Calu3 (cell line): ENCODE measurements at regions of chr4 and their contacts with region 1.

Region 1: DNA sequence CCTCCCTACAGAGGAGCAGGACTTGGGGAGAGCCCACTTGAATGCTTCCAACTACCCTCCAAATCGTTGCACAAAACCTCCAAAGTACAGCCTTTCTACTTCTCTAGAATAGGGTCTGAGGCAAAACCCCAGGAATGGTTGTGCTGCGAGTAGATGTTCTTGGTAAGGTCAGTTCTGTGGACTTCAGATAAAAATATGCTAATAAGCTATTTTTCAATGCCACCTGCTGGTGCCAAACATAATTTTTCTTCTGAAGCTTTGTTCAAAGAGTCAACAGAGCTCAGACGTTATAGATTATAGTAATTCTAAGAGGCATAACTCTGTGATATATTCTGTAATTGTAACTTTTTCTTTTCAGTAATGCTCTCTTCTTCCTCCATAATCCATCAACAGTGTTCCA is 425.7 kb downstream of the GPAT3 start:
- DNase-seq: peak; percentile 2
- H3K4me3 Mint-ChIP-seq: no peak overlapping the region
- H3K27ac Mint-ChIP-seq: no peak overlapping the region
- H3K4me1 Mint-ChIP-seq: no peaks in the 10 kb centered on the region
- H3K27me3 Mint-ChIP-seq: peaks cover 8% of the 10 kb centered on the region
- CTCF ChIP-seq: no peak

Region 2: GRCh38 chr4:83503974-83504373 is 457.6 kb before region 1 on chr4:
- CTCF ChIA-PET with region 1: no interaction called
- intact Hi-C with region 1: loop called (anchors 10 kb)
- DNase-seq: no peak
- H3K4me3 Mint-ChIP-seq: no peak overlapping the region
- H3K27ac Mint-ChIP-seq: no peak overlapping the region
- H3K4me1 Mint-ChIP-seq: no peaks in the 10 kb centered on the region
- H3K27me3 Mint-ChIP-seq: no peaks in the 10 kb centered on the region
- CTCF ChIP-seq: no peak

Region 3: DNA sequence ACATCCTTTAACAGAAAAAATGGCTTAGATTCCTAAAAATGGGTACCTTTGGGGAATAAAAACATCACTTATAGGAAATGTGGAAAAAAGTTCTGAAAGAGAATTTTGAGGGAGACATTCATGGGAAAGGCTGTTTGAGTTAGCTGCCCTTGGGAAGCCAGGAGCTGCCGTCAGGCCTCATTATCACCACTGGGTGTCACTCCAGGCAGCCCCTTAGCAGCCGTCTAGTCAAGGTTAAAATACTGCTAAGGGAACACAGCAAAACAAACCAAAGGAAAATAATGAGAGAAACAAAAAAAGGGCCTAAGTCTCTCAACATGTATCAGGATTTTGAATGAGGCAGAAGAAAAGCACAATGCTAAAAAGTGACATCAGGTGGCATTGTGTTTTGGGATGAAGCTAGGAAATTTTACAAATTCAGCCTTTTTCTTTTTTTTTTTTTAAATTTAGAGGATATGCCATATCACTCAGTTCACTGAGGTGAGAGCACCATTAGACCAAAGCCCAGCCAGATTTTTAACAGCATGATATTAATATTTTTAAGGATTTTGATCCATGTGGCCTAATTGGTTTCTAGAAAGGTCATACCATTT is 190.4 kb before region 1 on chr4:
- CTCF ChIA-PET with region 1: interaction called, 11 read pairs
- intact Hi-C with region 1: loop called (anchors 1 kb)
- DNase-seq: peak; percentile 38
- H3K4me3 Mint-ChIP-seq: no peak overlapping the region
- H3K27ac Mint-ChIP-seq: no peak overlapping the region
- H3K4me1 Mint-ChIP-seq: no peaks in the 10 kb centered on the region
- H3K27me3 Mint-ChIP-seq: no peaks in the 10 kb centered on the region
- CTCF ChIP-seq: peak; percentile 46

Region 4: GRCh38 chr4:83780053-83780728 is 181.4 kb before region 1 on chr4:
- CTCF ChIA-PET with region 1: no interaction called
- intact Hi-C with region 1: loop called (anchors 1 kb)
- DNase-seq: no peak
- H3K4me3 Mint-ChIP-seq: no peak overlapping the region
- H3K27ac Mint-ChIP-seq: no peak overlapping the region
- H3K4me1 Mint-ChIP-seq: no peaks in the 10 kb centered on the region
- H3K27me3 Mint-ChIP-seq: no peaks in the 10 kb centered on the region
- CTCF ChIP-seq: no peak

Region 5: GRCh38 chr4:84032372-84032771 is 70.8 kb after region 1 on chr4:
- CTCF ChIA-PET with region 1: no interaction called
- intact Hi-C with region 1: no loop called
- DNase-seq: no peak
- H3K4me3 Mint-ChIP-seq: no peak overlapping the region
- H3K27ac Mint-ChIP-seq: no peak overlapping the region
- H3K4me1 Mint-ChIP-seq: no peaks in the 10 kb centered on the region
- H3K27me3 Mint-ChIP-seq: peaks cover 18% of the 10 kb centered on the region
- CTCF ChIP-seq: no peak

Region 6: DNA sequence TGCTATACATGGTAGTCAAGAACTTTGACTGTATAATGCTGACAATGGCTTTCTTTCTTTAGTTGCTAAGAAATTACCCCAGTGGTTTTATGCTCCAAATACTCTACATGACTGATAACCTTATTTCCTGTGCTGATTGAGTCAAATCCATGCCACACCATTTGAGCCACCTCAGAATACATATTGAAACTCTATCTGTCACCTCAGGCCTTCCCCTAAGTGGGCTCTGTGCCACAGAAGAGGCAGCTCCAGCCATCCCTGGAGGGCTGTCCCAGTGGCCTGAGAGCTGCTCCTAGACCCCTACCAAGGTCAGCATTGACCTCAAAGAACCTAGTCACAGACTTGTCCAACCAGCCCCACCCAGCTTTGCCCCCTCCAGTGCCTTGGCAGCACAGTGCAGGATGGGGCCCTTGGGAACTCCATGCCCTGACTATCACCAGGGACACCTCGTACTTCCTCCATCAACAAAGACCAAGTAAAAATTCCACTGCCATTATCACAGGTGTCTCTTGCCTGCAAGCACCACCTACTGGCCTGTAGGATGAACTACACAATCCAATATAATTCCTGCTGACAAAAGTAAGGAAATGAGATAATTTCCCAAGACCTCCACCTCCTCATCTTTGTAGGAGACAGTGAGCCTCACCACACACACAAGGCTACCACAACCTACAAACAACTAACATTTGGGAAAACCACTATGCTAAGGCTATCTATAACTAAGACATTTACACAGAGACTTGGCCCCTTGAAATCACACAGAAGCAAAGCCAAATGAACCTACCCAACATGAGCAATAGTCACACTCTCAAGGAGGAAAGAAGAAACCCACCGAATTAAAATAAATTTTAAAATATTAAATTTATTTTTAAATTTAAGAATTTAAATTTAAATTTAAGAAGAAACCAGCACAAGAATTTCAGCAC is 297.6 kb after region 1 on chr4:
- CTCF ChIA-PET with region 1: no interaction called
- intact Hi-C with region 1: loop called (anchors 10 kb)
- DNase-seq: peak; percentile 7
- H3K4me3 Mint-ChIP-seq: no peak overlapping the region
- H3K27ac Mint-ChIP-seq: no peak overlapping the region
- H3K4me1 Mint-ChIP-seq: no peaks in the 10 kb centered on the region
- H3K27me3 Mint-ChIP-seq: peaks cover 29% of the 10 kb centered on the region
- CTCF ChIP-seq: no peak